Activated B cell treated with CpG ODN at 0.5 μM for 24 hours (primary cell): ENCODE measurements at regions of chr6 and their contacts with region 1.

Region 1: GRCh38 chr6:136289579-136290409 is at the start of gene BCLAF1:
- DNase-seq: peak; percentile 98
- ATAC-seq: peak; percentile 80
- H3K4me3 Mint-ChIP-seq: peak within 1 kb of the TSS; percentile 100
- H3K27ac Mint-ChIP-seq: peak within 1 kb of the TSS; percentile 100
- H3K4me1 Mint-ChIP-seq: peaks cover 49% of the 10 kb centered on the region
- H3K27me3 Mint-ChIP-seq: no peaks in the 10 kb centered on the region
- CTCF ChIP-seq: no peak
- total RNA-seq, gene BCLAF1: 253 and 259 TPM in 2 replicates

Region 2: GRCh38 chr6:135880066-135880972 is 409.5 kb before region 1 on chr6:
- CTCF ChIA-PET with region 1: no interaction called
- POLR2A ChIA-PET with region 1: interaction called, 10 read pairs
- intact Hi-C with region 1: loop called (anchors 2 kb)
- DNase-seq: no peak
- ATAC-seq: peak; percentile 84
- H3K4me3 Mint-ChIP-seq: peak overlapping the region; percentile 80
- H3K27ac Mint-ChIP-seq: peak overlapping the region; percentile 98
- H3K4me1 Mint-ChIP-seq: peaks cover 46% of the 10 kb centered on the region
- H3K27me3 Mint-ChIP-seq: no peaks in the 10 kb centered on the region
- CTCF ChIP-seq: no peak

Region 3: GRCh38 chr6:136274062-136274461 is 15.7 kb before region 1 on chr6:
- CTCF ChIA-PET with region 1: interaction called, 4 read pairs
- POLR2A ChIA-PET with region 1: interaction called, 10 read pairs
- intact Hi-C with region 1: loop called (anchors 1 kb)
- DNase-seq: no peak
- ATAC-seq: no peak
- H3K4me3 Mint-ChIP-seq: no peak overlapping the region
- H3K27ac Mint-ChIP-seq: no peak overlapping the region
- H3K4me1 Mint-ChIP-seq: peaks cover 2% of the 10 kb centered on the region
- H3K27me3 Mint-ChIP-seq: no peaks in the 10 kb centered on the region
- CTCF ChIP-seq: no peak

Region 4: GRCh38 chr6:136429264-136430065 is 139.7 kb after region 1 on chr6:
- CTCF ChIA-PET with region 1: no interaction called
- POLR2A ChIA-PET with region 1: no interaction called
- intact Hi-C with region 1: no loop called
- DNase-seq: no peak
- ATAC-seq: no peak
- H3K4me3 Mint-ChIP-seq: no peak overlapping the region
- H3K27ac Mint-ChIP-seq: no peak overlapping the region
- H3K4me1 Mint-ChIP-seq: no peaks in the 10 kb centered on the region
- H3K27me3 Mint-ChIP-seq: peaks cover 18% of the 10 kb centered on the region
- CTCF ChIP-seq: no peak

Region 5: GRCh38 chr6:136550330-136551071 is 260.7 kb after region 1 on chr6 and contains the start of gene MAP7:
- CTCF ChIA-PET with region 1: no interaction called
- POLR2A ChIA-PET with region 1: no interaction called
- intact Hi-C with region 1: loop called (anchors 5 kb)
- DNase-seq: peak; percentile 63
- ATAC-seq: peak; percentile 81
- H3K4me3 Mint-ChIP-seq: peak within 1 kb of the TSS; percentile 71
- H3K27ac Mint-ChIP-seq: no peak within 1 kb of the TSS
- H3K4me1 Mint-ChIP-seq: peaks cover 9% of the 10 kb centered on the region
- H3K27me3 Mint-ChIP-seq: peaks cover 32% of the 10 kb centered on the region
- CTCF ChIP-seq: peak; percentile 78
- total RNA-seq, gene MAP7: 0.35 and 0.56 TPM in 2 replicates

Region 6: DNA sequence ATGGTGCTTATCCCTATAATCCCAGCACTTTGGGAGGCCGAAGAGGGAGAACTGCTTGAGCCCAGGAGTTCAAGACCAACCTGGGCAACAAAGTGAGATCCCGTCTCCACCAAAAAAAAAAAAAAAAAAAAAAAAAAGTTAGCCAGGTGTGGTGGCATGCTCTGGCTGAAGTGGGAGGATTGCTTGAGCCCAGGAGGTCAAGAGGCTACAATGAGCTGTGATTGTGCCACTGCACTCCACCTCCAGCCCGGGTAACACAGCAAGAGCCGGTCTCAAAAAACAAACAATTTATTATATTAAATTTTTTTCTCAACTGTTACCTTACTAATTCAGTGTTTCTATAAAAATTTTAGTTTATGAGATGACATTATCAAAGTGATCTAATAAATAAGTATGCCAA is 345.8 kb after region 1 on chr6:
- CTCF ChIA-PET with region 1: no interaction called
- POLR2A ChIA-PET with region 1: interaction called, 14 read pairs
- intact Hi-C with region 1: no loop called
- DNase-seq: no peak
- ATAC-seq: no peak
- H3K4me3 Mint-ChIP-seq: no peak overlapping the region
- H3K27ac Mint-ChIP-seq: no peak overlapping the region
- H3K4me1 Mint-ChIP-seq: no peaks in the 10 kb centered on the region
- H3K27me3 Mint-ChIP-seq: no peaks in the 10 kb centered on the region
- CTCF ChIP-seq: no peak